Activated T-helper 2 cell treated with anti-CD3 and anti-CD28 coated beads, Interferon-gamma antibody, Interleukin-2, Interleukin-4, amounts not matched to agents 10 μg/mL and 5 μg/mL and 100 μg/mL, durations not matched to agents 14 hours and 24 hours and 36 hours (primary cell): ENCODE measurements at regions of chr4 and their contacts with region 1.

Region 1: GRCh38 chr4:98482847-98483806 is 175.3 kb downstream of the TSPAN5 start:
- DNase-seq: no peak
- H3K4me3 Mint-ChIP-seq: peak overlapping the region; percentile 70
- H3K27ac Mint-ChIP-seq: peak overlapping the region; percentile 99
- H3K4me1 Mint-ChIP-seq: peaks cover 88% of the 10 kb centered on the region
- H3K27me3 Mint-ChIP-seq: no peaks in the 10 kb centered on the region

Region 2: GRCh38 chr4:98493296-98493695 is 10.2 kb after region 1 on chr4:
- intact Hi-C with region 1: loop called (anchors 1 kb)
- DNase-seq: no peak
- H3K4me3 Mint-ChIP-seq: no peak overlapping the region
- H3K27ac Mint-ChIP-seq: peak overlapping the region; percentile 14
- H3K4me1 Mint-ChIP-seq: peaks cover 36% of the 10 kb centered on the region
- H3K27me3 Mint-ChIP-seq: no peaks in the 10 kb centered on the region